GM12878 (cell line): ENCODE measurements at regions of chr6 and their contacts with region 1.

Region 1: DNA sequence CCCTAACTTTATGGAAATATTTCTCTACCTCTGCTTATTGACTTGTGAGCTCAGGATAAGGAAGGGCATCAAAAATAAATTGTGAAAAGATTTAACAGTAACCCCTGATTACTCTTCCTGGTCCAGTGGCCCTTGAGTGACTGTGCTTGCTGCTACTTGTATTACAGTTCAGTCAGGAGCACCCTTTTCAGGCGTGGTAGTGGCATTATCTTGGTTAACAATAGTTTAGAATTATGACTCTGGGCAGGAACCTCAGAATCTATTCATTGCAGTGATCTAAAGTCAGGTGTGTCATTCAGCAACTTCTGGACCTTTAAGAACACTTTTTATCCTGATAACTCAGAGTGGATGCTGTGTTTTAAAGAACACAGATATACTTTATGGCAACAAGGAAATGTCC is 43.4 kb downstream of the FAM135A start:
- DNase-seq: no peak
- ATAC-seq: no peak
- H3K4me3 ChIP-seq: no peak overlapping the region
- H3K27ac ChIP-seq: no peak overlapping the region
- H3K4me1 ChIP-seq: no peaks in the 10 kb centered on the region
- H3K27me3 ChIP-seq: no peaks in the 10 kb centered on the region
- CTCF ChIP-seq: no peak
- EP300 ChIP-seq: no peak
- POLR2A ChIP-seq: no peak
- RAD21 ChIP-seq: no peak

Region 2: GRCh38 chr6:70474751-70475150 is 18.0 kb after region 1 on chr6:
- CTCF ChIA-PET with region 1: interaction called, 4 read pairs
- POLR2A ChIA-PET with region 1: no interaction called
- RAD21 ChIA-PET with region 1: no interaction called
- SMC1A ChIA-PET with region 1: interaction called, 11 read pairs
- in situ Hi-C with region 1: no loop called
- intact Hi-C with region 1: no loop called
- DNase-seq: no peak
- ATAC-seq: no peak
- H3K4me3 ChIP-seq: no peak overlapping the region
- H3K27ac ChIP-seq: no peak overlapping the region
- H3K4me1 ChIP-seq: no peaks in the 10 kb centered on the region
- H3K27me3 ChIP-seq: no peaks in the 10 kb centered on the region
- CTCF ChIP-seq: no peak
- EP300 ChIP-seq: no peak
- POLR2A ChIP-seq: no peak
- RAD21 ChIP-seq: no peak

Region 3: DNA sequence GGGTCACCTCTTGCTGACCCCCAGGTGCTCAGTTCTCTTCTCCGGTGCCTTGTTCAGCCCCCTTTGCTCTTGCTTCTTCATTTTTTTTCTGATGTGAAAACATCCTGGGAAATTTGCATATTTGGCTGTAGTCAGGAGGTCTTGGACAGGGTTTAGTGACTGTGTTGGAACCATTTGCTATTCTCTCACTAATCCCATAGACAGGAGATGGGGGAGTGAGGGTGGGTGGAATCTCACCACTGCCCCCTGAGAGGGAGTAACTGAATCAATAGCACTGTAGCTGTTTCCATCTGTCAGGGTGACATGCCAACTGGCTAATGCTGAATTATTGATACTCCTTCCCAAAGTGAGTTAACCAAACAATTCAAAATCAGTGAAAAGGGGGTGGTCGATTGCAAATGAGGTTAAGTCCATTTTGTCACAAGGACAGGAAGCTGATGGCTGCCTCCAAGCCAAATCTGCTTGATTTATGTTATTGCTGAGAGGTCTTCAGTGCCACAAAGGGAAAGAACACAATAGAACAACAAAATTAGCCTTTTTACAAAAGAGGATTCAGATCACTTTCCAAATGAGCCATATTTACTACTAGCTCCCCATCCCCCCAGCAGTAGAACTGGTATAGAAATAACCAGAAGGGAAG is 555.2 kb after region 1 on chr6:
- CTCF ChIA-PET with region 1: no interaction called
- POLR2A ChIA-PET with region 1: no interaction called
- RAD21 ChIA-PET with region 1: no interaction called
- SMC1A ChIA-PET with region 1: no interaction called
- in situ Hi-C with region 1: no loop called
- intact Hi-C with region 1: no loop called
- DNase-seq: no peak
- ATAC-seq: no peak
- H3K4me3 ChIP-seq: no peak overlapping the region
- H3K27ac ChIP-seq: no peak overlapping the region
- H3K4me1 ChIP-seq: no peaks in the 10 kb centered on the region
- H3K27me3 ChIP-seq: no peaks in the 10 kb centered on the region; a peak in 1 of 4 replicates
- CTCF ChIP-seq: no peak
- EP300 ChIP-seq: no peak
- POLR2A ChIP-seq: no peak
- RAD21 ChIP-seq: no peak